Mammary epithelial cell (primary cell): ENCODE measurements at regions of chr7 and their contacts with region 1.

Region 1: GRCh38 chr7:124246262-124246863 is 213.5 kb upstream of the TMEM229A start:
- DNase-seq: peak; percentile 81
- H3K4me3 ChIP-seq: no peak overlapping the region
- H3K27ac ChIP-seq: peak overlapping the region; percentile 99
- H3K4me1 ChIP-seq: peaks cover 24% of the 10 kb centered on the region
- H3K27me3 ChIP-seq: no peaks in the 10 kb centered on the region
- CTCF ChIP-seq: no peak

Region 2: DNA sequence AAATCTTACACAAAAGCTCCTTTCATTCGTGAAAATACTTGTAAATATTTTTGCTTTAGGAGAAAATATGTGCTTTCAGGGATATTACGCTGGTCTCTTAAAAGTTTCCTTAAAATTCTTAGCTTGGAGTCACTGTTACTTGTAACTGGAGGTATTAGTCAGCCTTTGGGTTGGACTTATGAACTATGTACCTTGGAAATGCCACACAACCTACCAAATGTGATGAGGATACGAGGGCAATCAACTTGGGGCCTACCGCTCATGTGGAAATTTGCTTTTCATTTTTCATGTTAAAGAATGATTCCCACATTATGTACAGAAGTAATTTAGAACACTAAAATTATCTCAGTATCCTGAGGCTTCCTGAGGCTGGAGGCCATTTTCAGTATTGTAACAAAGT is 298.2 kb before region 1 on chr7:
- CTCF ChIA-PET with region 1: no interaction called
- dilution Hi-C with region 1: no loop called
- in situ Hi-C with region 1: no loop called
- intact Hi-C with region 1: no loop called
- DNase-seq: no peak
- H3K4me3 ChIP-seq: no peak overlapping the region
- H3K27ac ChIP-seq: no peak overlapping the region
- H3K4me1 ChIP-seq: no peaks in the 10 kb centered on the region
- H3K27me3 ChIP-seq: peaks cover 3% of the 10 kb centered on the region
- CTCF ChIP-seq: no peak

Region 3: DNA sequence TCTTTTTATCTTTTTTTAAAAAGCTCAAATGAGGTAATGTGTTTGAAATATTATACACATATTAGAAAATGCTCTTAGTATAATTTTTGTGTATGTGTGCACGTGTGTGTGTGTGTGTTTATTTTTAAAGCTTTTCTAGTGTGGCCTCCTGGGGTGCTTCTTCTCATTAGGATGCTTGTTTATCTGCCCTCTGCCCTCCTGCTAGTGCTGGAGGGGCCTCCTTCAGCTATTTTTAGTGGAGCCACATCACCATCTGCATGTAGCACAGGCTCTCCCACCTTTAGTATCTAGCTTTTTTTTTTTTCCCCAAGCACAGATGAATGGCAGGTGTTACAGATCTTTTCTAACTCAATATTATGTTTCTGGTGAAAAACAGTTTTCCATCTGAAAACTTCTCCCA is 57.8 kb before region 1 on chr7:
- CTCF ChIA-PET with region 1: no interaction called
- dilution Hi-C with region 1: no loop called
- in situ Hi-C with region 1: no loop called
- intact Hi-C with region 1: no loop called
- DNase-seq: no peak
- H3K4me3 ChIP-seq: no peak overlapping the region
- H3K27ac ChIP-seq: no peak overlapping the region
- H3K4me1 ChIP-seq: no peaks in the 10 kb centered on the region
- H3K27me3 ChIP-seq: peaks cover 2% of the 10 kb centered on the region
- CTCF ChIP-seq: no peak

Region 4: GRCh38 chr7:124201768-124202349 is 44.5 kb before region 1 on chr7:
- CTCF ChIA-PET with region 1: no interaction called
- dilution Hi-C with region 1: no loop called
- in situ Hi-C with region 1: no loop called
- intact Hi-C with region 1: no loop called
- DNase-seq: peak; percentile 2
- H3K4me3 ChIP-seq: no peak overlapping the region
- H3K27ac ChIP-seq: no peak overlapping the region
- H3K4me1 ChIP-seq: no peaks in the 10 kb centered on the region
- H3K27me3 ChIP-seq: peaks cover 3% of the 10 kb centered on the region
- CTCF ChIP-seq: no peak

Region 5: DNA sequence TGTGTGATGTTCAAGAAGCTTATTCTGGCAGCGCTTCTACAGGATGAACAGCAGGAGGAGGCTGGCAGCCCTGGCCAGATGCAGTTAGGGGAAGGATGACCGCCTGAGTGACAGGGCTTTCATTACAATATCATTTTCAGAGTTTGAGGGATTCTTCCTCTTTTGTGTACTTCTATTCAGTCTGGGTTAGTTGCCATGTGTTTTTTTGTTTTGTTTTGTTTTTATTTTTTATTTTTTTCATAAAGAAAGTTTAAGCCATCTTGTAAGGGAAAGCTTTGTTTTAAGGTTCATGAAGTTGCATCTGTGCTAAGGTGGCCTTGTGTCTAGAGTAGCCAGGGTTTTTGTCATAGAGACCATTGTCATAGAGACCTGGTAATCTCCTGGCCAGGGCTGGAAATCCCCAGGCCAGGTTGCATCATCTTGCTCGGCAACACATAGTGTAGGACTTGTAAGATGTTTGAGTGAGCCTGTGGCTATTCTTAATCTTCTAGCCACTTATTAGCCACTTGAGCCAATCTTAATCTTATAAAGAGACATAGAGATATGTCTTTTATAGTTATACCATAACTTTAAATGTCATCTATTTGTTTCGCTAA is 17.0 kb after region 1 on chr7:
- CTCF ChIA-PET with region 1: no interaction called
- dilution Hi-C with region 1: no loop called
- in situ Hi-C with region 1: no loop called
- intact Hi-C with region 1: loop called (anchors 1 kb)
- DNase-seq: peak; percentile 60
- H3K4me3 ChIP-seq: no peak overlapping the region
- H3K27ac ChIP-seq: no peak overlapping the region
- H3K4me1 ChIP-seq: no peaks in the 10 kb centered on the region
- H3K27me3 ChIP-seq: no peaks in the 10 kb centered on the region
- CTCF ChIP-seq: no peak